ENCODE measurements at regions of chr20 and their contacts with region 1.

Region 1: GRCh38 chr20:9978397-9979004 is 56.3 kb upstream of the ANKEF1 start:
- DNase-seq: peak in 7 of 9 donors; percentile 46 to 73 (median 60)
- ATAC-seq: peak; percentile 93
- H3K4me3 ChIP-seq: no peak overlapping the region
- H3K4me3 Mint-ChIP-seq: no peak overlapping the region
- H3K27ac ChIP-seq: no peak overlapping the region
- H3K27ac Mint-ChIP-seq: peak overlapping the region in 1 of 9 donors; percentile 73
- H3K4me1 ChIP-seq: no peaks in the 10 kb centered on the region
- H3K4me1 Mint-ChIP-seq: peaks cover 0 to 4% (median 0%) of the 10 kb centered on the region in 7 donors
- H3K27me3 ChIP-seq: no peaks in the 10 kb centered on the region
- H3K27me3 Mint-ChIP-seq: peaks cover 0 to 15% (median 6%) of the 10 kb centered on the region in 5 donors

Region 2: DNA sequence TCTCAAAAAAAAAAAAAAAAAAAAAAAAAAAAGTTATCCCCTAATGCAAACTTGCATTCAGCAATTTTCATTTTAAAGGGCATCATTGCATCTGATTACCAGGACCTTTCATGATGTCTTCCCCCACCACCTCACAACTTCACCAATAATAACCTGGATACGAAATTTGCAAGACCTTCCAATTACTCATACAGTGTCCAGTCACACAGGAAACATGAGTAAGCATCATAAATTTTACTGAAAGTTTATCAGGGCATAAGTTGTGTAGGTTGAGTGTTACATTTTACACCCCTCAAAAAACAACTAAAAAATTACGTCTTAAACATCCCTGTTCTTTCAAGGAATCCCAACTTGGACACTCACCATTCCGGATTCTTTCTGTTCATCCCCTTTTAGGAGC is 22.9 kb before region 1 on chr20:
- CTCF ChIA-PET with region 1: no interaction called
- POLR2A ChIA-PET with region 1: no interaction called
- intact Hi-C with region 1: no loop called
- DNase-seq: no peak
- ATAC-seq: no peak
- H3K4me3 ChIP-seq: no peak overlapping the region
- H3K4me3 Mint-ChIP-seq: no peak overlapping the region
- H3K27ac ChIP-seq: no peak overlapping the region
- H3K27ac Mint-ChIP-seq: no peak overlapping the region
- H3K4me1 ChIP-seq: no peaks in the 10 kb centered on the region
- H3K4me1 Mint-ChIP-seq: no peaks in the 10 kb centered on the region
- H3K27me3 ChIP-seq: no peaks in the 10 kb centered on the region
- H3K27me3 Mint-ChIP-seq: peaks cover 0 to 56% (median 23%) of the 10 kb centered on the region in 5 donors

Region 3: DNA sequence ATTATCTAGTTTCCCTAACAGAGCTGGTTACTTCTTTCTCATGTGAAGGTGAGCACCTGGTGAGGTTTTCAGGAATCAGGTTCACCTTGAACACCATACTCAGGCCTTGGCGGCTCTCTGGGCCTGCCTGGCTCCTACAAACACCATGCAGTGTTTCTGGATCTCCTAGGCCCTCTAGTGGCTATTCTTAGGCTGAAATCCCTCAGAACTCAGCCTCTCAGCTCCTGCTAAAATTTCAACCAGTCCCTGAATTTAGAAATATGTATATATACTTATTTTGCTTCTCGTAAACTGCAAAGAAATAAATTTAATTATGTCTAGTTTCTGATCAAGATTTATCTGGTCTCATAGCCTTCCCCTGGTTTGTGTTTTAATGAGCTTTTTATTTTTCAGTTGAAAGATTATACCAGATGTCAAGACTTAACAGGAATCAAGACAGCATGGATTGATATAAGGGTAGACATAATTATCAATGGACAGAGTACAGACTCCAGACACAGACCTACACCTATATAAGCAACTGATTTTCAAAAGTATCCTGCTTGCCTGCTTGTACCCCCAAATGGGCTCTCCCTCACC is 112.2 kb after region 1 on chr20:
- CTCF ChIA-PET with region 1: interaction called, 85 read pairs
- POLR2A ChIA-PET with region 1: no interaction called
- intact Hi-C with region 1: loop called (anchors 1 kb)
- DNase-seq: peak in 6 of 9 donors; percentile 7 to 51 (median 30)
- ATAC-seq: peak; percentile 67
- H3K4me3 ChIP-seq: no peak overlapping the region
- H3K4me3 Mint-ChIP-seq: no peak overlapping the region
- H3K27ac ChIP-seq: no peak overlapping the region
- H3K27ac Mint-ChIP-seq: peak overlapping the region in 1 of 9 donors; percentile 24
- H3K4me1 ChIP-seq: no peaks in the 10 kb centered on the region
- H3K4me1 Mint-ChIP-seq: no peaks in the 10 kb centered on the region
- H3K27me3 ChIP-seq: no peaks in the 10 kb centered on the region
- H3K27me3 Mint-ChIP-seq: peaks cover 0 to 16% (median 0%) of the 10 kb centered on the region in 5 donors

Region 4: GRCh38 chr20:10201321-10201870 is 222.9 kb after region 1 on chr20:
- CTCF ChIA-PET with region 1: no interaction called
- POLR2A ChIA-PET with region 1: no interaction called
- intact Hi-C with region 1: no loop called
- DNase-seq: no peak
- ATAC-seq: no peak
- H3K4me3 ChIP-seq: no peak overlapping the region
- H3K4me3 Mint-ChIP-seq: no peak overlapping the region
- H3K27ac ChIP-seq: no peak overlapping the region
- H3K27ac Mint-ChIP-seq: no peak overlapping the region
- H3K4me1 ChIP-seq: no peaks in the 10 kb centered on the region
- H3K4me1 Mint-ChIP-seq: no peaks in the 10 kb centered on the region
- H3K27me3 ChIP-seq: no peaks in the 10 kb centered on the region
- H3K27me3 Mint-ChIP-seq: peaks cover 0 to 8% (median 0%) of the 10 kb centered on the region in 5 donors

Region 5: GRCh38 chr20:10427060-10427692 is 448.7 kb after region 1 on chr20:
- CTCF ChIA-PET with region 1: interaction called, 56 read pairs
- POLR2A ChIA-PET with region 1: no interaction called
- intact Hi-C with region 1: loop called (anchors 1 kb)
- DNase-seq: peak in 5 of 9 donors; percentile 13 to 28 (median 23)
- ATAC-seq: peak; percentile 58
- H3K4me3 ChIP-seq: no peak overlapping the region
- H3K4me3 Mint-ChIP-seq: no peak overlapping the region
- H3K27ac ChIP-seq: no peak overlapping the region
- H3K27ac Mint-ChIP-seq: peak overlapping the region in 2 of 9 donors; percentile 35 to 52
- H3K4me1 ChIP-seq: no peaks in the 10 kb centered on the region
- H3K4me1 Mint-ChIP-seq: peaks cover 24 to 60% (median 46%) of the 10 kb centered on the region in 7 donors
- H3K27me3 ChIP-seq: no peaks in the 10 kb centered on the region
- H3K27me3 Mint-ChIP-seq: no peaks in the 10 kb centered on the region

Region 6: GRCh38 chr20:10553326-10553984 is 575.0 kb after region 1 on chr20:
- CTCF ChIA-PET with region 1: no interaction called
- POLR2A ChIA-PET with region 1: no interaction called
- intact Hi-C with region 1: loop called in 1 of 2 experiments (anchors 5 kb)
- DNase-seq: peak in 3 of 9 donors; percentile 11 to 37 (median 20)
- ATAC-seq: peak; percentile 49
- H3K4me3 ChIP-seq: no peak overlapping the region
- H3K4me3 Mint-ChIP-seq: no peak overlapping the region
- H3K27ac ChIP-seq: no peak overlapping the region
- H3K27ac Mint-ChIP-seq: no peak overlapping the region
- H3K4me1 ChIP-seq: peaks cover 0 to 5% of the 10 kb centered on the region in 2 donors
- H3K4me1 Mint-ChIP-seq: peaks cover 24 to 42% (median 37%) of the 10 kb centered on the region in 7 donors
- H3K27me3 ChIP-seq: no peaks in the 10 kb centered on the region
- H3K27me3 Mint-ChIP-seq: peaks cover 0 to 2% (median 0%) of the 10 kb centered on the region in 5 donors

Region 7: DNA sequence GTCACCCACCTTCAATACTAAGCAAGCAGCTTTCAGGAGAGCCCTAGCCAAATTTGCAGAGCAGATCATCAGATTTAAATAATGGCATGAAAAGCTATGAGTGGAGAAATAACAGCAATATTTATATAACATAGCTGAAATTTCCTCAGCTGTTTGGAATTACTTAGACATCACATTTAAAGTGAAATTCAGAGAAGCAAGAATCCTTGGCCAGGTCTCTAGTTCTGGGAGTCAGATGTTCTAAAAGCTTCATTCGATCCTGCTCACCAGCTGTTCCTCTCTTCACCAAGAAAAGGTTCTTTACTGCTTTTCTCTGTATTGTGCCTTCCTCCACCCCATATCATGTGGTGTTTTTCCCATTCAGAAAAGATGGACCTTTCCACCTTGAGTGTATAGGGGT is 847.6 kb after region 1 on chr20:
- CTCF ChIA-PET with region 1: no interaction called
- POLR2A ChIA-PET with region 1: no interaction called
- intact Hi-C with region 1: no loop called
- DNase-seq: no peak
- ATAC-seq: no peak
- H3K4me3 ChIP-seq: no peak overlapping the region
- H3K4me3 Mint-ChIP-seq: no peak overlapping the region
- H3K27ac ChIP-seq: no peak overlapping the region
- H3K27ac Mint-ChIP-seq: no peak overlapping the region
- H3K4me1 ChIP-seq: no peaks in the 10 kb centered on the region
- H3K4me1 Mint-ChIP-seq: no peaks in the 10 kb centered on the region
- H3K27me3 ChIP-seq: no peaks in the 10 kb centered on the region
- H3K27me3 Mint-ChIP-seq: no peaks in the 10 kb centered on the region